Activated naive CD4-positive, alpha-beta T cell treated with anti-CD3 and anti-CD28 coated beads for 36 hours (primary cell): ENCODE measurements at regions of chr15 and their contacts with region 1.

Region 1: GRCh38 chr15:90376789-90377188 is 11.3 kb upstream of the IQGAP1 start:
- DNase-seq: peak; percentile 63
- H3K4me3 Mint-ChIP-seq: peak overlapping the region; percentile 41
- H3K27ac Mint-ChIP-seq: peak overlapping the region; percentile 92
- H3K4me1 Mint-ChIP-seq: peaks cover 36% of the 10 kb centered on the region
- H3K27me3 Mint-ChIP-seq: no peaks in the 10 kb centered on the region

Region 2: DNA sequence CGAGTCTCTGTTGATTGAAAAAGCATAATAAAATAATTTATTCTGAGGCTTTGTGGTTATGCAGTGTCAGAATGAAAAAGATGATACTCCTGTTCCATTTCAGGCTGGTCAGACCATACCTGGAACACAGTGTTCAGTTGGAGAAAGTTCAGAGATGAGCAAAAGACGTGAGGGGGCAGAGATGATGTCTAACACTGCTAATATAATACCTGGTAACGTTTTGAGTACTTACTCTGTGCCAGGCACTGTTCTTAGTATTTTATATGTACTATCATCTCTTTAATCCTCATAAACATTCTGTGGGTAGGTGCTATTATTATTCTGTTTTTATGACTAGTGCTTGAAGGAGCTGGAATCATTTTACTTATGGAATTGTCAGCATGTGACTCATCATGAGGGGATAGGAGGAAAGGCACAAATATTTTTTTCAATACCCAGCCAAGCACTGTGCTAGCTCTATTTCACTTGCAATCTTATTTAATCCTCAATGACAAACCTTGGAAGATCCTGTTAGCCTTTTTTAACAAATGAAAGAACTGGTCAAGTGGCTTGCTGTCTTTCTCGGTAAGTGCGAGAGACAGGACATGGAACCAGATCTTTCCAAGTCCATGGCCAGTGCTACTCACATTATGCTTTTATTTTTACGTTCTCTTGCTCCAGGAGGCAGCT is 43.1 kb after region 1 on chr15:
- CTCF ChIA-PET with region 1: no interaction called
- intact Hi-C with region 1: loop called (anchors 1 kb)
- DNase-seq: peak; percentile 73
- H3K4me3 Mint-ChIP-seq: peak overlapping the region; percentile 33
- H3K27ac Mint-ChIP-seq: peak overlapping the region; percentile 87
- H3K4me1 Mint-ChIP-seq: peaks cover 77% of the 10 kb centered on the region
- H3K27me3 Mint-ChIP-seq: no peaks in the 10 kb centered on the region

Region 3: GRCh38 chr15:90459368-90459767 is 82.6 kb after region 1 on chr15:
- CTCF ChIA-PET with region 1: no interaction called
- intact Hi-C with region 1: no loop called
- DNase-seq: no peak
- H3K4me3 Mint-ChIP-seq: no peak overlapping the region
- H3K27ac Mint-ChIP-seq: no peak overlapping the region
- H3K4me1 Mint-ChIP-seq: peaks cover 9% of the 10 kb centered on the region
- H3K27me3 Mint-ChIP-seq: no peaks in the 10 kb centered on the region

Region 4: GRCh38 chr15:90489514-90489913 is 112.7 kb after region 1 on chr15:
- CTCF ChIA-PET with region 1: no interaction called
- intact Hi-C with region 1: no loop called
- DNase-seq: no peak
- H3K4me3 Mint-ChIP-seq: no peak overlapping the region
- H3K27ac Mint-ChIP-seq: peak overlapping the region; percentile 2
- H3K4me1 Mint-ChIP-seq: peaks cover 8% of the 10 kb centered on the region
- H3K27me3 Mint-ChIP-seq: no peaks in the 10 kb centered on the region